CD8-positive, alpha-beta T cell (primary cell): ENCODE measurements at regions of chr1 and their contacts with region 1.

Region 1: DNA sequence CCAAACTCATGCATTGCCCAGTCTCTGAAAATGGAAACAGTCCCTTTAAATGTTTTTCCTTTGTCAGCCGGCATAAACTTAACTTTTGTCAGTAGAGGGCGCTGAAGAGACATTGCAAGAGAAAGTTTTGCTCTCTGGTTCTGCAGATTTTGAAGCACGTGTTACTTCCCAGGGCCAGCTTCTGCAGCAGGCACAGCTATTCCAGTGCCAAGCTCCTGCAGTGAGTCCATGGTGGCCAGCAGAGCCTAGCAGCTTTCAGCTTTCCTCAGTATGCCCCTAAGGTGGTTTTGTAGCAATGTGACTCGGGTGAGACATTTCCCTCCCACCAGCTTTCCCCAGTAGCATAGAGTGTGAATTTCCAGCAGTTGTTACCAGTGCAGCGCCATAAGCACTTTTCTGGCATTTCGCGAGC is 2.6 kb upstream of the IFI44L start:
- DNase-seq: peak; percentile 13 to 87 (median 54)
- ATAC-seq: peak; percentile 71
- H3K4me3 ChIP-seq: no peak overlapping the region
- H3K4me3 Mint-ChIP-seq: peak overlapping the region; percentile 33
- H3K27ac ChIP-seq: no peak overlapping the region
- H3K27ac Mint-ChIP-seq: peak overlapping the region; percentile 30
- H3K4me1 ChIP-seq: peaks cover 28% of the 10 kb centered on the region
- H3K4me1 Mint-ChIP-seq: peaks cover 39% of the 10 kb centered on the region
- H3K27me3 ChIP-seq: no peaks in the 10 kb centered on the region
- H3K27me3 Mint-ChIP-seq: no peaks in the 10 kb centered on the region
- CTCF ChIP-seq: peak; percentile 72

Region 2: DNA sequence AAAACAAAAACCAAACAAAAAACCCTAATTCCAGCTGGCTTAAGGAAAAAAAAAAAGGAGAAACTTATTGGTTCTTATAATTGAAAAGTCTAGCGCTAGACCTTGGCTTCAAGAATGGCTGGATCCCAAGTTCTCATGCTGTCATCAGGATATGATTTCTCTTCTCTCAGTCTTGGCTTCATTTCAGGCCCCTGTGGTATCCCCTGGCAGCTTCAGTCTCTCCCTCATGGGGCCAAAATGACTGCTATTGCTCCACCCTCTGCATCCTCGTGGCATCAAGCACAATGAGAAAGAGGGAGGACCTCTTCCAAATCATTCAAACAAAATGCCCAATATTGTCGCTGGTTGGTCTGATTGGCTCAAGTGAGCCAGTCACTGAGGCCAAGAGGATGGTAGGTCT is 491.1 kb before region 1 on chr1:
- CTCF ChIA-PET with region 1: no interaction called
- POLR2A ChIA-PET with region 1: no interaction called
- intact Hi-C with region 1: loop called (anchors 2 kb)
- DNase-seq: no peak
- ATAC-seq: no peak
- H3K4me3 ChIP-seq: no peak overlapping the region
- H3K4me3 Mint-ChIP-seq: no peak overlapping the region
- H3K27ac ChIP-seq: no peak overlapping the region
- H3K27ac Mint-ChIP-seq: no peak overlapping the region
- H3K4me1 ChIP-seq: no peaks in the 10 kb centered on the region
- H3K4me1 Mint-ChIP-seq: no peaks in the 10 kb centered on the region
- H3K27me3 ChIP-seq: no peaks in the 10 kb centered on the region
- H3K27me3 Mint-ChIP-seq: no peaks in the 10 kb centered on the region
- CTCF ChIP-seq: no peak

Region 3: GRCh38 chr1:78607334-78607927 is 10.2 kb before region 1 on chr1:
- CTCF ChIA-PET with region 1: interaction called, 25 read pairs
- POLR2A ChIA-PET with region 1: no interaction called
- intact Hi-C with region 1: no loop called
- DNase-seq: no peak
- ATAC-seq: no peak
- H3K4me3 ChIP-seq: no peak overlapping the region
- H3K4me3 Mint-ChIP-seq: no peak overlapping the region
- H3K27ac ChIP-seq: no peak overlapping the region
- H3K27ac Mint-ChIP-seq: no peak overlapping the region
- H3K4me1 ChIP-seq: no peaks in the 10 kb centered on the region
- H3K4me1 Mint-ChIP-seq: no peaks in the 10 kb centered on the region
- H3K27me3 ChIP-seq: no peaks in the 10 kb centered on the region
- H3K27me3 Mint-ChIP-seq: no peaks in the 10 kb centered on the region
- CTCF ChIP-seq: peak; percentile 20

Region 4: DNA sequence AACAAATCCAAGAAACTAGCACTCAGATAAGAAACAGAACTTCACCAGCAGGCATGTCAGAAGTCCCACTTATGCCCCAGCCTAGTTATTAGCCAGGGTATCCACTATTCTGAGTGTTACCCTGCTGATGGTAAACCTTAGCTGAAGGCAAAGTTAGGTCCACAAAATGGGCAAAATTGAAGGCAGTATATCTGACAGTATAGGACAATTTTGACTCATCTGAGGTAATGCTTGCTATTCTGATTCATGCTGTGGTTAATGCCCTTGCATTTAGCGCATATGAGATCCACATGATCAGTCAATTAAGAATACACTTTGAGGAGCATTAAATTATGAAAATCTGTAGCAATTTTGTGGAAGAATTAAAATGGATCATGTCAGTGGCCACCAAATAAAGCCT is 47.1 kb after region 1 on chr1:
- CTCF ChIA-PET with region 1: interaction called, 94 read pairs
- POLR2A ChIA-PET with region 1: interaction called, 4 read pairs
- intact Hi-C with region 1: no loop called
- DNase-seq: no peak
- ATAC-seq: no peak
- H3K4me3 ChIP-seq: no peak overlapping the region
- H3K4me3 Mint-ChIP-seq: no peak overlapping the region
- H3K27ac ChIP-seq: no peak overlapping the region
- H3K27ac Mint-ChIP-seq: peak overlapping the region; percentile 33
- H3K4me1 ChIP-seq: no peaks in the 10 kb centered on the region
- H3K4me1 Mint-ChIP-seq: no peaks in the 10 kb centered on the region
- H3K27me3 ChIP-seq: no peaks in the 10 kb centered on the region
- H3K27me3 Mint-ChIP-seq: no peaks in the 10 kb centered on the region
- CTCF ChIP-seq: no peak

Region 5: GRCh38 chr1:78683079-78683478 is 65.5 kb after region 1 on chr1:
- CTCF ChIA-PET with region 1: interaction called, 49 read pairs
- POLR2A ChIA-PET with region 1: interaction called, 3 read pairs
- intact Hi-C with region 1: no loop called
- DNase-seq: no peak
- ATAC-seq: no peak
- H3K4me3 ChIP-seq: no peak overlapping the region
- H3K4me3 Mint-ChIP-seq: no peak overlapping the region
- H3K27ac ChIP-seq: no peak overlapping the region
- H3K27ac Mint-ChIP-seq: no peak overlapping the region
- H3K4me1 ChIP-seq: no peaks in the 10 kb centered on the region
- H3K4me1 Mint-ChIP-seq: no peaks in the 10 kb centered on the region
- H3K27me3 ChIP-seq: no peaks in the 10 kb centered on the region
- H3K27me3 Mint-ChIP-seq: peaks cover 14% of the 10 kb centered on the region
- CTCF ChIP-seq: no peak